IMR-90 (cell line): ENCODE measurements at regions of chr6 and their contacts with region 1.

Region 1: DNA sequence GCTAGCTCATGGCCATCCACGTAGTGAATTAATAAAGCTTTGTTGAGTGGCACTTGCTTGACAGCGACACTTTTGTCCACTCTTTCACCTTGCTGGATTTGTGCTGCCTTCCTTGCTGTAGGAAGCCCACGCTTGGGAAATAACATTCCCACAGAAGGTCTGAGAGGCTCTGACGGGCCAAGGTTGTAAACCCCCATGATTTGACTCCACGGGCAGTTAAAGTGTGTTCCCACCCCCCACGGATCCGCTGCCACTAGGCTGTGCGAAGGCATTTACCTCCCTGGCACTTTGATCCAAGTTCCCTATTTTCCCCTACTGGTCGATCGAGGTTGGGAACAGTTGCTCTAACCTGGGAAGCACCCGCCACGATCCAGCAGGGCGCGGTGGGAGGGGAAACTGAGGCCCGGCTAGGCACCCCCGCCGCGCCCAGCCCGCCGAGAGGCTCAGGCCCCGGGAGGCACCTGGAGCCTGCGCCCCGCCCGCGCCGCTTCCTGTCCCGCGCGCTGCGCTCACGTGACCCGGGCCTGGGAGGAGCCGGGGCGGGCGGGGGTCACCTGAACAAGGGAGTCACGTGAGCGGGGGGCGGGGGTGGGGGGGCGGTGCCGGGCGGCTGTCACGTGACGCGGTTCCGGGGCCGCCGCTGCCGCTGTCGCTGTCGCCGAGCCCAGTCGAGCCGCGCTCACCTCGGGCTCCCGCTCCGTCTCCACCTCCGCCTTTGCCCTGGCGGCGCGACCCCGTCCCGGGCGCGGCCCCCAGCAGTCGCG is at the start of gene IGF2R:
- DNase-seq: peak; percentile 80
- ATAC-seq: peak; percentile 83
- H3K4me3 ChIP-seq: peak within 1 kb of the TSS; percentile 91
- H3K27ac ChIP-seq: peak within 1 kb of the TSS; percentile 93
- H3K4me1 ChIP-seq: peaks cover 5% of the 10 kb centered on the region
- H3K27me3 ChIP-seq: peaks cover 10% of the 10 kb centered on the region
- CTCF ChIP-seq: 0 out of 2 replicates have a peak, but pooled peaks have one; percentile 13
- POLR2A ChIP-seq: peak; percentile 75
- RAD21 ChIP-seq: no peak
- total RNA-seq, gene IGF2R: 33.2 and 38.6 TPM in 2 replicates

Region 2: DNA sequence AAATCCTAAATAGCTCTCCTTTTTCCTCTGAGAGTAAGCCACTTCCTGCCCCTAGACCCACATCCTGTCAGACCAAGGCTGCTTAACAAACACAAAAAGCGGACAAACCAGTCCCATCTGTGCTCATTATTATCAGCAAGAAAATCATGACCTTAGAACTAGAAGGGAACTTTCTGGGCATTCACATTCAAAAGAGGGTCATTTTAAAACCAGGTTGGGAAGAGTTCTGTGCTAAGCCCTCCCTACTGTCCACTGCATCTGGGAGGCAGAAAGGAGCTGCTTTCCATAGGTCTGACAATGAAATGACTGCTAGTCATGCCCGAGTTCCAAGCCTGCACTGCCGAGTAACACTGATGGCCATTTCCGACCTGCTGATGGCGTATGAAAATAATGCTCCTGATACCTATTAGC is 1164.9 kb before region 1 on chr6:
- CTCF ChIA-PET with region 1: no interaction called
- POLR2A ChIA-PET with region 1: no interaction called
- dilution Hi-C with region 1: no loop called
- in situ Hi-C with region 1: no loop called
- intact Hi-C with region 1: no loop called
- DNase-seq: no peak
- ATAC-seq: peak; percentile 54; the same call in 1 of the 2 replicates
- H3K4me3 ChIP-seq: no peak overlapping the region
- H3K27ac ChIP-seq: no peak overlapping the region
- H3K4me1 ChIP-seq: peaks cover 12% of the 10 kb centered on the region
- H3K27me3 ChIP-seq: no peaks in the 10 kb centered on the region
- CTCF ChIP-seq: no peak
- POLR2A ChIP-seq: no peak
- RAD21 ChIP-seq: no peak

Region 3: DNA sequence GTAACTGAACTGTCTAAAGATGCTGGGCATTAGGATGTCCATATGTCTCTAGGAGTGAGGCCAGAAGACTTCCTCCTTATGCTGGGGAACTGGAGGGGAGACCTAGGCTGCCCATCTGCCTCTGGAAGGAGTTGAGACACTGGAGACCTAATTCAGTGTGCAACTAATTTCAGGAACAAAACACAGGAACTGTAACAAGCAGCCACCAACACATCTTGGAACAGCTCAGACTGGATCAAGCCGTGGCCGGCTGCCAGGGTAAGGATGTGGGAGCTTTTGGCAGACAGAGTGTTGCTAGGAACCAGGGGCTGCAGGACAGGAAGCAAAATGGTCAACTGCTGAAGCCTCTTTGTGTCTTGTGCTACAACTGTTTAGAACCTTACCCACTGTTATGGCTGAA is 94.2 kb before region 1 on chr6:
- CTCF ChIA-PET with region 1: no interaction called
- POLR2A ChIA-PET with region 1: no interaction called
- dilution Hi-C with region 1: no loop called
- in situ Hi-C with region 1: no loop called
- intact Hi-C with region 1: no loop called
- DNase-seq: peak; percentile 13
- ATAC-seq: peak; percentile 37; the same call in 1 of the 2 replicates
- H3K4me3 ChIP-seq: no peak overlapping the region
- H3K27ac ChIP-seq: no peak overlapping the region
- H3K4me1 ChIP-seq: no peaks in the 10 kb centered on the region
- H3K27me3 ChIP-seq: peaks cover 8% of the 10 kb centered on the region; the same call in 1 of the 2 replicates
- CTCF ChIP-seq: no peak
- POLR2A ChIP-seq: no peak
- RAD21 ChIP-seq: no peak

Region 4: DNA sequence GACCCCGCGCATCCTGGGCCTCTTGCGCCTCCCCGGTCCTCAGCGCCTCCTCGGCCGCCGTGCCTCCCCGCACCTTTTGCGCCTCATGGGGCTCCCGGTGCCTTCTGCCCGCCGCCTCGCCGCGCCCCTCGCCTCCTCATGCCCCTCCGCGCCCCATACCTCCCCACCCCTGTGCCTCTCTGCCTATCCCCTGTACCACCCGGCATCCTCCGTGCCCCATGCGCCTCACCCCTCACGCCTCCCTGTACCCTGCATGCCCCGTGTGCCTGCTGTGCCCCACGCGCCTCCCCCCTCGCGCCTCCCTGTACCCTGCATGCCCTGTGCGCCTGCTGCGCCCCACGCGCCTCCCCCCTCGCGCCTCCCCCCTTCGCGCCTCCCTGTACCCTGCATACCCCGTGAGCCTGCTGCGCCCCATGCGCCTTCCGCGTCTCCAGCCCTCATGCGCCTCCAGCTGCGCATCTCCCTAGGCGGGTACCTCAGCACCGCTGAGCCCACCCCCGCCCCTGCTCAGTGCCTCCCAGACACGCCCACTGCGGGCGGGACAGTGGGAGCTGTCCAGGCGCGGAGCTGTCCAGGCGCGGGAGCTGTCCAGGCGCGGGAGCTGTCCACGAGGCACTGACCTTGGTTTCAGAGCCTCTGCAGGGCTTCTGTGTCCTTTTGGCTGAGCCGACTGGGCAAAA is 37.4 kb after region 1 on chr6:
- CTCF ChIA-PET with region 1: interaction called, 4 read pairs
- POLR2A ChIA-PET with region 1: no interaction called
- dilution Hi-C with region 1: no loop called
- in situ Hi-C with region 1: no loop called
- intact Hi-C with region 1: loop called (anchors 5 kb)
- DNase-seq: peak; percentile 61
- ATAC-seq: peak; percentile 98
- H3K4me3 ChIP-seq: no peak overlapping the region
- H3K27ac ChIP-seq: no peak overlapping the region
- H3K4me1 ChIP-seq: peaks cover 2% of the 10 kb centered on the region; the same call in 1 of the 2 replicates
- H3K27me3 ChIP-seq: no peaks in the 10 kb centered on the region
- CTCF ChIP-seq: no peak
- POLR2A ChIP-seq: no peak
- RAD21 ChIP-seq: no peak

Region 5: DNA sequence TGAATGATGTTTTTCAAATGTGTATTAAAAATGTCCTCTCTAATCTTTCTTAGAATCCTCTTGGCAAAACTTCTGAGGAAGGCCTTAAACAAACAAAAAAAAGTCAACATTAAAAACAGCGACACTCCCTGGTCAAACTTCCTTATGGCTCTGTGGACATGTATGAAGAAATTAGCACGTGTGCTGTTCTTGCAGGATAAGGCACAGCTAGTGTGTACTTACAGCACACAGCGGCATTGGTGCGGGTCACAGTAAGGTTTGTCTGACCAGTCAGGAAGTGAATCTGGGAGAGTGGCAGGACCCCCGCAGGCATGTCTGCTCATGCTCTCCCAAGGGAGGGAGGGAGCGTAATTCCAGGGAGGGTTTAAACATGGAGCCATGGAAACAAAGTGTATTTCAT is 191.8 kb after region 1 on chr6:
- CTCF ChIA-PET with region 1: no interaction called
- POLR2A ChIA-PET with region 1: no interaction called
- dilution Hi-C with region 1: no loop called
- in situ Hi-C with region 1: no loop called
- intact Hi-C with region 1: no loop called
- DNase-seq: peak; percentile 20
- ATAC-seq: no peak
- H3K4me3 ChIP-seq: no peak overlapping the region
- H3K27ac ChIP-seq: no peak overlapping the region
- H3K4me1 ChIP-seq: no peaks in the 10 kb centered on the region; the same call in 1 of the 2 replicates
- H3K27me3 ChIP-seq: no peaks in the 10 kb centered on the region
- CTCF ChIP-seq: peak; percentile 25
- POLR2A ChIP-seq: no peak
- RAD21 ChIP-seq: no peak